ENCODE measurements at regions of chr5 and their contacts with region 1.

Region 1: GRCh38 chr5:1883120-1883924 is 597 bp upstream of the IRX4 start:
- DNase-seq: no peak

Region 2: GRCh38 chr5:1930880-1931603 is 47.7 kb after region 1 on chr5:
- intact Hi-C with region 1: loop called (anchors 5 kb)
- DNase-seq: no peak

Region 3: DNA sequence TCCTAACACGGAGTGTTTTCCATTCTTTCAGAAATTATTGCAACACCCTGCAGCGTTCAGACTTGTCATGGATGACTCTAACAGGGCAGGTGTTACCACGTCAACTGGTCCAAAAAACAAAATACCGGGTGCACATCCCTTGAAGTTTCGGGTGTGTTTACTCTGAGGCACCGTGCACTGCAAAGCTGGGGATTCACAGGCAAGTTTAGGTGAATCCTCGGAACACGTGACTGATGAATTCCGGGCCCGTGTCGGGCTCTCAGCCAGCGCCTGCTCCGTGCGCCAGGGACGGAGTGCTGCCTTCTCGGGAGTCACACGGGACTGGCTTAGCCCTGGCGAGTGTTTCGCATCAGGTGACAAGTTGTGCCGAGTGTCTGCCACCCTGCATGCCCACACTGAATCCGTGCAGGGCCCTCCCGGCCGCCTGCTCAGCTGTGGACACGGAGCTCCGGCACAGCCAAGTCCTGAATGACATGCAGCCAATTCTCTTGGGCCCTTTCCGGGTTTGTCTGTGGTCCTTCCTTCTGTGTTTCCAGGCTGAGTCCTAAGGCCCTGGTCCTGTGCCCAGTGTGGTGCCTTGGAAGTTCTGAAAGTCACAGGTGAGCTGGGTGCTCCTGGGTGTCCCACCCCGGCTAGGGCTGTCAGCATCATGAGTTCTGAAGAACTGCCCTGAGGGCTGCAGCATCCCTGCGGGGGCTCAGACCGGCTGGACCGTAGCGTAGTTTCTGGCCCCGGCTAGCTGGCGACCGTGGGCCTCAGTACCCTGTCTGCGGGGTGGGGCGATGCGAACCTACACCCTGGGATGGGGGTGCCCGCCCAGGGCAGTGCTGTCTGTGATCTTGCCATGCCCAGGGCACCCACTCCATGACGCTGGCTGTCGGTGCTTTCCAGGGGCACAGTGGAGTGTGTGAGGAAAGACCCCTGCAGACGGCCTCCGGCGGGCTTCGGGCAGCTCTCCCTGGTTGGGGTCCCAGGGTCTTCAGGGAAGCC is 65.6 kb after region 1 on chr5:
- intact Hi-C with region 1: loop called (anchors 5 kb)
- DNase-seq: peak; percentile 87

Region 4: DNA sequence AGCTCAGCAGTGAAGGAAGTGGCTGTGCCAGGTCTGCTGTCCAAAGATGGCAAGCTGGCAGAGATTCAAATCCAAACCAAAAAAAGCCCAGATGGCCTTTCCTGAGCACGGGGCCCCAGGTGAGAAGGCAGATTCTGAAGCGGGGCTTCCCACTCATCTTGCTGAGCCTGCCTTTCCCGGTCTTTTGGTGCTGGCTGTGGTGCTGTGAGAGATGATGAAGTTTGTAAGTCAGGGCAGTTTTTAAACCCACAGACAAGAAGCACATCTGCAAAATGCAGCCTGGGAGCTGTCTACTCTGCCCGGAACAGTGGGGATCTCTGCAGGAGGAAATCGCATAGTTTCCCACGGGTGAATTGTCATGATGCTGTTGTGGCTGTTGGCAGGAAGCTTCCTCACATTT is 84.4 kb after region 1 on chr5:
- intact Hi-C with region 1: no loop called
- DNase-seq: peak; percentile 68

Region 5: DNA sequence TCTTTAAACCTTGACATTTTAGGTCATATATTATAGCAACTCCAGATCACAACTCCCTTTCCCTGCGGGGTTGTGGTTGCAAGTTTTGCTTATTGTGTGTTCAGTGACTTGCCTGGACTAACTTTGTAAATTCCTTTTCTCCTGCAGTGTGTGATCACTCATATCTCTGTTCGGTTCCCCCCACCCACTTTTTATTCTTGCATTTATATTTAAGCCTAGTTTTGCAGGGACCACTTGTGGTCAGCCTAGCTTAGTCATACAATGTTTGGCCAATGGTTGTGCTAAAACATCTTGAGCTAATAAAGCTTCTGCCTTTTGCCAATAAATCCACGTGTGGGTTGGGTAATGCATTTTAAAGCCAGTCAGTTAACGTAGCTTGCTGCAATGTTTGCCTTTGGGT is 145.9 kb after region 1 on chr5:
- intact Hi-C with region 1: no loop called
- DNase-seq: no peak

Region 6: DNA sequence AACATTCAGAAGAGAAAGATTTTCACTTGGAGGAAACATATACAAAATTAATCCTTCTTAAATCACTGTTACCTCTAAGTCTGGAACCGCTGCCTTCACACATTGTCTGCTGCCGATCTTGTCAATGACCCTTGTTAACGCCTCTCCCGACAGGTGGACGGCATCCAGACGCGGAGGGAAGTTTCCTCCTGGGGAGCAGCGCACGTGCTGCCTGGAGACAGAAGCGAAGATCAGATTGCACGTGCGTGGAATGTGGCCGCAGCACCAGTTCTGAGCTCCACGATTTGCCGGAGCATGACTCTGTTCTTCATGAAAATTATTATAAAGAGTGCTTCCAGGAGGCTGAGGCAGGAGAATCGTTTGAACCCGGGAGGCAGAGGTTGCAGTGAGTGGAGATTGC is 183.1 kb after region 1 on chr5:
- intact Hi-C with region 1: no loop called
- DNase-seq: no peak